ENCODE measurements at regions of chr17 and their contacts with region 1.

Region 1: GRCh38 chr17:58417300-58418092 is at the start of gene RNF43:
- DNase-seq: peak; percentile 63
- ATAC-seq: peak; percentile 100
- H3K4me3 Mint-ChIP-seq: peak within 1 kb of the TSS; percentile 12
- H3K27ac Mint-ChIP-seq: peak within 1 kb of the TSS; percentile 64
- H3K4me1 Mint-ChIP-seq: peaks cover 21% of the 10 kb centered on the region
- H3K27me3 Mint-ChIP-seq: no peaks in the 10 kb centered on the region
- CTCF ChIP-seq: no peak
- total RNA-seq, gene RNF43: 1.5 and 2.1 TPM in 2 replicates

Region 2: GRCh38 chr17:58249270-58250133 is 168.0 kb before region 1 on chr17:
- CTCF ChIA-PET with region 1: interaction called, 3 read pairs
- POLR2A ChIA-PET with region 1: no interaction called
- intact Hi-C with region 1: loop called (anchors 1 kb)
- DNase-seq: peak; percentile 80
- ATAC-seq: peak; percentile 96
- H3K4me3 Mint-ChIP-seq: peak overlapping the region; percentile 84
- H3K27ac Mint-ChIP-seq: no peak overlapping the region
- H3K4me1 Mint-ChIP-seq: peaks cover 14% of the 10 kb centered on the region
- H3K27me3 Mint-ChIP-seq: peaks cover 4% of the 10 kb centered on the region
- CTCF ChIP-seq: peak; percentile 71

Region 3: GRCh38 chr17:58329035-58329809 is 88.3 kb before region 1 on chr17:
- CTCF ChIA-PET with region 1: interaction called, 16 read pairs
- POLR2A ChIA-PET with region 1: interaction called, 191 read pairs
- intact Hi-C with region 1: loop called (anchors 1 kb)
- DNase-seq: peak; percentile 75
- ATAC-seq: peak; percentile 36
- H3K4me3 Mint-ChIP-seq: peak overlapping the region; percentile 100
- H3K27ac Mint-ChIP-seq: peak overlapping the region; percentile 93
- H3K4me1 Mint-ChIP-seq: peaks cover 65% of the 10 kb centered on the region
- H3K27me3 Mint-ChIP-seq: peaks cover 2% of the 10 kb centered on the region
- CTCF ChIP-seq: no peak

Region 4: DNA sequence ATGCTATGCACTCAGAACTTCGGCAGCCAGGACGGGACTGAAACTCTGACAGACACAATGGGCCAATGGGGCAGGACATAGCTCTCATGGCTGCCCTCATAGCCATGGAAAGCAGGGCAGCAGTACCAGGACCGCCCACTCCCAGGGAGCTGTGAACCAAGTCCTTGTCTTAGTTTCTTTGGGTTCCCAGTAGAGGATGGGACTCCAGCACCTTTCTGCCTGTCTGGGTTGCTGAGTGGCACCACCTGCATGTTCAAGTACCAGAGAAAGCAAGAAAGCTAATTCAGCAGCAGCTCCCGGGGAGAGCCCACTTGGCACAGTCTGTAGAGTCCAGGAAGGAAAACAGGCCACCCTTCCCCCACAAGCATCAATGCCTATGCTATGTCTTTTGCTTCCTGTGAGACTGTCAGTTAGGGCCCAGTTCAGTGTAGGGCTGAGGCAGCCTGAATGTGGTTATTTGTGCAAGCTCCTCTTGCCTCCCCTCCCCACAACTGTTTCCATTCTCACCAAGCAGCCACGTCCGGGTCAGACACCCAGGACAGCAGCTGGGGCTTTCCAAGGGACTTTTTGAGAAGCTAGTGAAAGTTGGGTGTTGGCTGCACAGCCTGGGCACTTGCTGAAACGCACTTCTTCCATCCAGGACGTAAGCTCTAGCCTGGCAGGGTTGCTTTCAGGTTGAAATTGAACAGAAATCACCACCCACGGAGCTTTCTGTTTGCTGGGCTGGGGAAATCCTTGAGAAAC is 73.3 kb before region 1 on chr17:
- CTCF ChIA-PET with region 1: interaction called, 27 read pairs
- POLR2A ChIA-PET with region 1: interaction called, 191 read pairs
- intact Hi-C with region 1: loop called (anchors 1 kb)
- DNase-seq: peak; percentile 71
- ATAC-seq: peak; percentile 83
- H3K4me3 Mint-ChIP-seq: peak overlapping the region; percentile 83
- H3K27ac Mint-ChIP-seq: peak overlapping the region; percentile 99
- H3K4me1 Mint-ChIP-seq: peaks cover 91% of the 10 kb centered on the region
- H3K27me3 Mint-ChIP-seq: no peaks in the 10 kb centered on the region
- CTCF ChIP-seq: no peak

Region 5: GRCh38 chr17:58369214-58370031 is 48.1 kb before region 1 on chr17:
- CTCF ChIA-PET with region 1: interaction called, 11 read pairs
- POLR2A ChIA-PET with region 1: interaction called, 7 read pairs
- intact Hi-C with region 1: no loop called
- DNase-seq: no peak
- ATAC-seq: peak; percentile 66
- H3K4me3 Mint-ChIP-seq: no peak overlapping the region
- H3K27ac Mint-ChIP-seq: peak overlapping the region; percentile 51
- H3K4me1 Mint-ChIP-seq: peaks cover 42% of the 10 kb centered on the region
- H3K27me3 Mint-ChIP-seq: no peaks in the 10 kb centered on the region
- CTCF ChIP-seq: no peak

Region 6: GRCh38 chr17:58487589-58488427 is 70.3 kb after region 1 on chr17 and contains the start of gene HSF5:
- CTCF ChIA-PET with region 1: no interaction called
- POLR2A ChIA-PET with region 1: interaction called, 6 read pairs
- intact Hi-C with region 1: loop called (anchors 1 kb)
- DNase-seq: peak; percentile 79
- ATAC-seq: peak; percentile 96
- H3K4me3 Mint-ChIP-seq: peak within 1 kb of the TSS; percentile 69
- H3K27ac Mint-ChIP-seq: peak within 1 kb of the TSS; percentile 66
- H3K4me1 Mint-ChIP-seq: peaks cover 19% of the 10 kb centered on the region
- H3K27me3 Mint-ChIP-seq: no peaks in the 10 kb centered on the region
- CTCF ChIP-seq: no peak
- total RNA-seq, gene HSF5: 4.5 and 5.5 TPM in 2 replicates